HEK293T (cell line): ENCODE measurements at regions of chr17 and their contacts with region 1.

Region 1: GRCh38 chr17:43701318-43701743 is 39.6 kb upstream of the MEOX1 start:
- DNase-seq: no peak

Region 2: DNA sequence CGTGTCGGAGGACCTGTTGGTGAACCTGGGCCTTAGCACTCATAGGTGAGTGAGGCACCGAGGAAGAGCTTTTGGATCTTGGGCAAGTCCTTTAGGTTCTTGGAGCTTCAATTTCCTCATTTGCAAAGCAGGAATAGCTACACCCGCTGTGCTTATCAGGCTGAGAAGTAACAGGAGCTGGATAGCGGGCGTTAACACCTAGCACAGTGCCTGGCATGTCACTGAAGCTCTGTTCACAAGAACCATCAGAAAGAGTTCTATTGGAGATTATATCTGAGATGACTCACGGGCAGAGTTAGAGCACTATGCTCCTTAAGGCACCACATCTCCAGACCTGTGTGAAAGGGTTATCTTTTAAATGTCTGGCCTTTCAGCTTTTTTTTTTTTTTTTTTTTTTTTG is 52.4 kb before region 1 on chr17:
- CTCF ChIA-PET with region 1: no interaction called
- POLR2A ChIA-PET with region 1: no interaction called
- DNase-seq: no peak

Region 3: DNA sequence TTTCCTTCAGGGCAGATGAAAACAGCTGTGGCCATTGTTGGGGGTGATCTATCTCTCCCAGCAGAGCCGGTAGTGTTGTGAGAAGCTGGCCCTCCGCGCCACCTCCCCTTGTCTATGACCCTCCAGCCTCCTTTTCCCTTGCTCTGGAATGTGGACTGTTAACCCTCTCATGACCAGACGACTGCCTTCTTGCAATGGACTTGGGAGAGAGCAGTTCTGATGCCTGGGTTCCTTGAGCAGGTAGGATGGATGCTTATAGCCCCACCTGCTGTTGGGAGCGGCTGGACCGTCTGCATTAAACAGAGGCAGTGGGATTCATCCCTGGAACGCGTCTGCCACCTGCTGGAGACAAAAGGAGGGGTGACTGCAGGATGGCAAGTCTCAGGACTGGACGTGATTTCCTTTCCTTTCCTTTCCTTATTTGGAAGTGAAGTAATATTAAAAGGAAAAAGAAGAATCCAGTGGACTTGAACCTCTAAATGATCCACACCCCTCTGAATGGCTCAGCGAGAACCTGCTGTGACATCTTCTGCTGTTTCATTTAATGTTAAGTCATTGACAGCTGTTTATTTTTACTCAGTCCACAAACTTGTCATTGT is 59.0 kb after region 1 on chr17:
- CTCF ChIA-PET with region 1: interaction called, 34 read pairs
- POLR2A ChIA-PET with region 1: no interaction called
- DNase-seq: peak; percentile 90